Adrenal gland (tissue), 19 donors: ENCODE measurements at regions of chr3 and their contacts with region 1.

Region 1: GRCh38 chr3:32934150-32934742 is 17.2 kb upstream of the CCR4 start:
- DNase-seq: peak in 2 of 7 donors; percentile 46 to 55
- H3K4me3 ChIP-seq: no peak overlapping the region
- H3K27ac ChIP-seq: no peak overlapping the region
- H3K4me1 ChIP-seq: no peaks in the 10 kb centered on the region
- H3K27me3 ChIP-seq: no peaks in the 10 kb centered on the region
- CTCF ChIP-seq: peak; percentile 48 to 77 (median 61)
- POLR2A ChIP-seq: no peak

Region 2: GRCh38 chr3:32698506-32698905 is 235.7 kb before region 1 on chr3:
- intact Hi-C with region 1: no loop called
- DNase-seq: no peak
- H3K4me3 ChIP-seq: no peak overlapping the region
- H3K27ac ChIP-seq: no peak overlapping the region
- H3K4me1 ChIP-seq: peaks cover 0 to 2% of the 10 kb centered on the region in 2 donors
- H3K27me3 ChIP-seq: no peaks in the 10 kb centered on the region
- CTCF ChIP-seq: no peak
- POLR2A ChIP-seq: no peak

Region 3: DNA sequence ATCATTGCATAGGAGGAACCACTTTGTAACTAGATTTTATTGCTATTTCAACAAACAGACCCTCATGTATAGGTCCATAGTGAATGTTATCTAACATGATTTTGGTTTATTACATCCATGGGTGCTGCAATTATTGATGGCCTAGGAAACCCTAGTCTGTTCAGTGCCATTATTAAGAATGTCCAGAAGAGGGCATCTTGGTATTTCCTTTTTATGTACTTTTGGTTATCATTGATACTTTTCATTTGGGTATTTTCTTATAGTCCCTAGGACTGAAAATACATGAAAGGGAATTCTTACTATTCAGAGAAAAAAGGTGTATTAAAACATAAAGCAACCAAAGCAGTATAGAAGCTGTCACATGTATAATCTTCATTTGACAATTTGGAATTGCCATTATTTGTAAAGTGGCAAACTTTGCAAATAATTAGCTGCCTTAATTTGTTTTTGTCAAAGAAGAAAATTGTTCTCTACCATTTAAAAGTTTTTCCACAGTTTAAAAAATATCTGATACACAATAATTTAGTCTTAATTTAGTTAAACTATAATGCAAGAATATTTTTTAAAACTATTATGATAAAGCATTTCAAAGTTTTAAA is 200.5 kb before region 1 on chr3:
- intact Hi-C with region 1: loop called in 1 of 2 experiments (anchors 5 kb)
- DNase-seq: no peak
- H3K4me3 ChIP-seq: no peak overlapping the region
- H3K27ac ChIP-seq: no peak overlapping the region
- H3K4me1 ChIP-seq: no peaks in the 10 kb centered on the region
- H3K27me3 ChIP-seq: no peaks in the 10 kb centered on the region
- CTCF ChIP-seq: peak; percentile 34 to 64 (median 52)
- POLR2A ChIP-seq: no peak

Region 4: GRCh38 chr3:32973982-32974381 is 39.7 kb after region 1 on chr3:
- intact Hi-C with region 1: no loop called
- DNase-seq: no peak
- H3K4me3 ChIP-seq: no peak overlapping the region
- H3K27ac ChIP-seq: no peak overlapping the region
- H3K4me1 ChIP-seq: no peaks in the 10 kb centered on the region
- H3K27me3 ChIP-seq: no peaks in the 10 kb centered on the region
- CTCF ChIP-seq: no peak
- POLR2A ChIP-seq: no peak